GM10248 (cell line): ENCODE measurements at regions of chr12 and their contacts with region 1.

Region 1: GRCh38 chr12:15546102-15546701 is 223.9 kb downstream of the PTPRO start:
- DNase-seq: peak; percentile 49
- CTCF ChIP-seq: no peak

Region 2: DNA sequence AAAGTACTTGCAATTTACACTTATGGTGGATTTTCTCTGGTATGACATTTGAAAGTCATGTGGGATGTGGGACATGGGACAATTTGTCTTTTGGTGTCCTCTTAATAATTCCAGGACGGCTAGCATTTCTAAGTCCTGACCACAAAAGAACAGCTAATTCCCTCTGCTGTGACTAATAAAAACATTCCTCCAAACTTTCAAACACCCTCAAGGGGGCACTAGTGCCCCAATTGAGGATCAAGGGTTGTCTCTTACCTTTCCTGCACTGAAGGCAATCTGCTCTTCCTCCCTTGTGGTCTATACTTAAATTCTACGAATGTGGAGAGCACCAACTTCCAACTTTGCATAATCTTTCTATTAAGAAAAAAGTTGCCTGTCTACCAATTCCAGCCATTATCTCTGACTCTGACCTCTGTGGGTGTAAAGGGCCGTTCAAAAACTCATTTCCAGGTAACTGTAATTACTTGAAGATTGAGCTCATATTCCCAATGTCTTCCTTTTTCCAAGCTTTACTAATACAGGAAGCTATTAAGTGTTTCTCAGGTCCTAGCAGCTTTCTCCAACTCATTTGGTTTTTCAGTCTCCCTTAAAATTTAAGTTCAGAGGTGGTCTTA is 13.7 kb before region 1 on chr12:
- CTCF ChIA-PET with region 1: interaction called, 72 read pairs
- POLR2A ChIA-PET with region 1: no interaction called
- DNase-seq: peak; percentile 47
- CTCF ChIP-seq: peak; percentile 64

Region 3: DNA sequence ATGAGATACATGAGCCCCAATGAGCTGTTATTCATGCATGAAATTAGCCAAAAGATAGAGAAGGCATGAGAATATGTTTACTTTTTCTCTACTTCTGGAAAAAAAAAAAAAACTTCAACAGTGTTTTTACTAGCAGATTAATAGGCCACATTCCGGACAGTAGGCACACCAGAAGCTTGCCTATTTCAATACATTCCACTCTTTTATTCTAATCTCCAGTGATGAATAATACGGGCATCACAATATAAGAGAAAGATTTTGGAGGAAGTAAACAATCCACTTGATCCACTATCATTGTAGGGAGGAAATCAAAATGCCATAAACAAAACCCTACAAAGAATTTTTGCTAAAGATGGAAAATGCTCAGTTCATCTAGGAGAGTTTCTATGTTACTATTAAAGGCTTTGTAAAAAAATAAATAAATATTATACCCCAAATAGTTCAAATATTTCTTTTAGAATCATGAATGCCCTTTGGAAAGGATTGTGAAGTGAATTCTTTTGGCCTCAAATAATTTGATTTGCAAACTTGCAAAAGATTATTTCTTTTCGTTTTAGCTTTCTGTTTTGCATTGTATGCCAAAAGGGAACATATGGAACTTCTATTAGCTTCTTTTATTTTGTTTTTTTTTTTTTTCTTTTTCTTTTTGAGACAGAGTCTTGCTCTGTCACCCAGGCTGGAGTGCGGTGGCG is 10.4 kb after region 1 on chr12:
- CTCF ChIA-PET with region 1: interaction called, 38 read pairs
- POLR2A ChIA-PET with region 1: interaction called, 3 read pairs
- DNase-seq: no peak
- CTCF ChIP-seq: no peak

Region 4: DNA sequence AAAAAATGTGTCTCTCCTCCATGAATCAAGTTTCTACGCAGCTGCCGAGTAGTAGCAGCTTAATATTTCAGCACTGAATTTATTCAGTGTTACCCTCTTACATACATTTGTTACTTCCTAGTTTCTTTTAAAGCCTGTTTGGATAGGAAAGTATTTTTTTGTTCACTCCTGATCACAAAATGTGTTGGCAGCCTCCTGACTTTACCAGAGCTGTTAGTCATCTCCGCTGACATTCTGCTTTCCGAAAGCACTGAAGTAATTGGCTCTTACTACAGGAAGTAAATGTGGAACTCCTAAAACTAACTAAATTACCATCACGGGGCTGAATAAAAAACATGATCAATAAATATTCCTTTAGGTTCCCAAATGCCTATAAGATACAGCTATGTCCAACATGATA is 17.5 kb after region 1 on chr12:
- CTCF ChIA-PET with region 1: interaction called, 38 read pairs
- POLR2A ChIA-PET with region 1: no interaction called
- DNase-seq: no peak
- CTCF ChIP-seq: no peak

Region 5: GRCh38 chr12:15808652-15809051 is 262.4 kb after region 1 on chr12:
- CTCF ChIA-PET with region 1: no interaction called
- POLR2A ChIA-PET with region 1: no interaction called
- DNase-seq: no peak
- CTCF ChIP-seq: no peak

Region 6: GRCh38 chr12:16261944-16262343 is 715.7 kb after region 1 on chr12:
- CTCF ChIA-PET with region 1: no interaction called
- POLR2A ChIA-PET with region 1: no interaction called
- DNase-seq: no peak
- CTCF ChIP-seq: no peak